Caco-2 (cell line): ENCODE measurements at regions of chr12 and their contacts with region 1.

Region 1: GRCh38 chr12:53664936-53665335 is 10.9 kb downstream of the ATP5MC2 start:
- DNase-seq: no peak
- H3K4me3 ChIP-seq: no peak overlapping the region
- H3K4me3 Mint-ChIP-seq: no peak overlapping the region
- H3K27ac Mint-ChIP-seq: no peak overlapping the region
- H3K4me1 ChIP-seq: peaks cover 2% of the 10 kb centered on the region; the same call in 1 of the 2 replicates
- H3K4me1 Mint-ChIP-seq: peaks cover under 1% of the 10 kb centered on the region
- H3K27me3 ChIP-seq: no peaks in the 10 kb centered on the region
- H3K27me3 Mint-ChIP-seq: no peaks in the 10 kb centered on the region
- CTCF ChIP-seq: no peak

Region 2: DNA sequence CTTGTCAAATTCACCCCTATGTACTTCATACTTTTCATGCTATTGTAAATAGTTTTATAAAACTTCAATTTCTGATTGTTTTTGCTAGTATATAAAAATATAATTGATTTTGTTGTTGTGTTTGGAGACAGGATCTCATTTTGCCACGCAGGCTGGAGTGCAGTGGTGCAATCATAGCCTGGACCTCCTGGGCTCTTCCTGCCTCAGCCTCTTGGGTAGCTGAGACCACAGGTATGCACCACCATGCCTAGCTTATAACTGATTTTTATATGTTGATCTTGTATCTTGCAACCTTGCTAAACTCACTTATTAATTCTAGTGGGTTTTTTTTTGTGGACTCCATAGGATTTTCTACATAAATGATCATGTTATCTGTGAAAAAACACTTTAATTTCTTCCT is 12.6 kb before region 1 on chr12:
- CTCF ChIA-PET with region 1: no interaction called
- POLR2A ChIA-PET with region 1: interaction called, 10 read pairs
- intact Hi-C with region 1: no loop called
- DNase-seq: no peak
- H3K4me3 ChIP-seq: no peak overlapping the region
- H3K4me3 Mint-ChIP-seq: no peak overlapping the region
- H3K27ac Mint-ChIP-seq: no peak overlapping the region
- H3K4me1 ChIP-seq: no peaks in the 10 kb centered on the region
- H3K4me1 Mint-ChIP-seq: no peaks in the 10 kb centered on the region
- H3K27me3 ChIP-seq: no peaks in the 10 kb centered on the region
- H3K27me3 Mint-ChIP-seq: no peaks in the 10 kb centered on the region
- CTCF ChIP-seq: no peak

Region 3: DNA sequence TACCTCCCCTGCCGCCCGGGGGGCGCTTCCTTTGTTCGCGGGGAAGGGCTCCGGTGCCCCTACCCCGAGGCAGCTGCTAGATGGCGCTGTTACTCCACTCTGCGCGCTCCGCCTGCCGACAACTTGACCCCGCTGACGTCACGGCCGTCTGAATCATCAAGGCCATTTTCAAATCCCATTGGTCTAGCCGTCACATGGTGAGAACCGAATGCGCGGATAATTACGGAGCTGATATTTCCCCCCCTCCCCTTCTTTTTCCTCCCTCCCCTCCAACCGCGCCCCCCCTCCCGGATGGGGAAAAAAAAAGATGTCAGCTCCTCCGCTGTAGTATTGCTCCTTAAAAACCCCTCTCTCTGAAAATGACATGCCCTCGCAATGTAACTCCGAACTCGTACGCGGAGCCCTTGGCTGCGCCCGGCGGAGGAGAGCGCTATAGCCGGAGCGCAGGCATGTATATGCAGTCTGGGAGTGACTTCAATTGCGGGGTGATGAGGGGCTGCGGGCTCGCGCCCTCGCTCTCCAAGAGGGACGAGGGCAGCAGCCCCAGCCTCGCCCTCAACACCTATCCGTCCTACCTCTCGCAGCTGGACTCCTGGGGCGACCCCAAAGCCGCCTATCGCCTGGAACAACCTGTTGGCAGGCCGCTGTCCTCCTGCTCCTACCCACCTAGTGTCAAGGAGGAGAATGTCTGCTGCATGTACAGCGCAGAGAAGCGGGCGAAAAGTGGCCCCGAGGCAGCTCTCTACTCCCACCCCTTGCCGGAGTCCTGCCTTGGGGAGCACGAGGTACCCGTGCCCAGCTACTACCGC is 320.2 kb after region 1 on chr12 and contains the start of gene HOXC10:
- CTCF ChIA-PET with region 1: no interaction called
- POLR2A ChIA-PET with region 1: no interaction called
- intact Hi-C with region 1: no loop called
- DNase-seq: peak; percentile 90 to 92
- H3K4me3 ChIP-seq: peak within 1 kb of the TSS; percentile 52
- H3K4me3 Mint-ChIP-seq: peak within 1 kb of the TSS; percentile 77
- H3K27ac Mint-ChIP-seq: peak within 1 kb of the TSS; percentile 81
- H3K4me1 ChIP-seq: peaks cover 41% of the 10 kb centered on the region
- H3K4me1 Mint-ChIP-seq: peaks cover 29% of the 10 kb centered on the region
- H3K27me3 ChIP-seq: no peaks in the 10 kb centered on the region
- H3K27me3 Mint-ChIP-seq: no peaks in the 10 kb centered on the region
- CTCF ChIP-seq: peak; percentile 77 to 83
- total RNA-seq, gene HOXC10: 4.0 and 4.5 TPM in 2 replicates